ENCODE measurements at regions of chr7 and their contacts with region 1.

Region 1: GRCh38 chr7:55280031-55280454 is 85.1 kb upstream of the LANCL2 start:
- DNase-seq: peak; percentile 42 to 69 (median 56)
- H3K4me3 ChIP-seq: no peak overlapping the region
- H3K4me3 Mint-ChIP-seq: no peak overlapping the region
- H3K27ac ChIP-seq: no peak overlapping the region
- H3K27ac Mint-ChIP-seq: peak overlapping the region in 1 of 8 donors; percentile 80
- H3K4me1 ChIP-seq: no peaks in the 10 kb centered on the region
- H3K4me1 Mint-ChIP-seq: peaks cover 4 to 5% (median 5%) of the 10 kb centered on the region in 3 donors
- H3K27me3 ChIP-seq: no peaks in the 10 kb centered on the region
- H3K27me3 Mint-ChIP-seq: peaks cover 0 to 4% of the 10 kb centered on the region in 2 donors

Region 2: GRCh38 chr7:55212838-55213539 is 67.1 kb before region 1 on chr7:
- CTCF ChIA-PET with region 1: no interaction called
- POLR2A ChIA-PET with region 1: no interaction called
- DNase-seq: no peak
- H3K4me3 ChIP-seq: no peak overlapping the region
- H3K4me3 Mint-ChIP-seq: no peak overlapping the region
- H3K27ac ChIP-seq: no peak overlapping the region
- H3K27ac Mint-ChIP-seq: no peak overlapping the region
- H3K4me1 ChIP-seq: no peaks in the 10 kb centered on the region
- H3K4me1 Mint-ChIP-seq: no peaks in the 10 kb centered on the region
- H3K27me3 ChIP-seq: no peaks in the 10 kb centered on the region
- H3K27me3 Mint-ChIP-seq: peaks cover 11 to 14% of the 10 kb centered on the region in 2 donors

Region 3: DNA sequence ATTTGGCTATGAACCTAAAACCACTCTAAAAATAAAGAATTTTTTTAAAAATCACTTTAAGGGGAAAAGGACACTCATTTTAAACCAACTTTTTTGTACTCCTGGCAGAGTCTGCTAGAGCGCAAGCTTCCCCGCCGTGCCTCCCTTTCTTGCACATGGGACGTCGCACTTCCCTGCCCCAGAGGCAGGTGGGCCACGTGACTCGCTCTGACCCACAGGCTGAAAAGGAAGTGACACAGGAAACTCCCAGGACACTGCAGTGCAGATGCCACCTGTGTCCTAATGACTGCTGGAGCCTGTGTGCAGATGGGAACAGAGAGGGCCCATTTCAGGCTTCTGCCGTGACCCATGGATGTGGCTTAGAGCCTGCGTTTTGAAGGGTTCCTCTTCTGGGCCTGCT is 57.0 kb before region 1 on chr7:
- CTCF ChIA-PET with region 1: no interaction called
- POLR2A ChIA-PET with region 1: no interaction called
- DNase-seq: no peak
- H3K4me3 ChIP-seq: no peak overlapping the region
- H3K4me3 Mint-ChIP-seq: no peak overlapping the region
- H3K27ac ChIP-seq: no peak overlapping the region
- H3K27ac Mint-ChIP-seq: no peak overlapping the region
- H3K4me1 ChIP-seq: no peaks in the 10 kb centered on the region
- H3K4me1 Mint-ChIP-seq: no peaks in the 10 kb centered on the region
- H3K27me3 ChIP-seq: no peaks in the 10 kb centered on the region
- H3K27me3 Mint-ChIP-seq: peaks cover 3 to 8% of the 10 kb centered on the region in 2 donors

Region 4: GRCh38 chr7:55260671-55261385 is 19.2 kb before region 1 on chr7:
- CTCF ChIA-PET with region 1: no interaction called
- POLR2A ChIA-PET with region 1: no interaction called
- DNase-seq: no peak
- H3K4me3 ChIP-seq: no peak overlapping the region
- H3K4me3 Mint-ChIP-seq: no peak overlapping the region
- H3K27ac ChIP-seq: no peak overlapping the region
- H3K27ac Mint-ChIP-seq: no peak overlapping the region
- H3K4me1 ChIP-seq: no peaks in the 10 kb centered on the region
- H3K4me1 Mint-ChIP-seq: peaks cover 4 to 6% (median 5%) of the 10 kb centered on the region in 3 donors
- H3K27me3 ChIP-seq: peaks cover 5% of the 10 kb centered on the region
- H3K27me3 Mint-ChIP-seq: peaks cover 16 to 41% of the 10 kb centered on the region in 2 donors

Region 5: DNA sequence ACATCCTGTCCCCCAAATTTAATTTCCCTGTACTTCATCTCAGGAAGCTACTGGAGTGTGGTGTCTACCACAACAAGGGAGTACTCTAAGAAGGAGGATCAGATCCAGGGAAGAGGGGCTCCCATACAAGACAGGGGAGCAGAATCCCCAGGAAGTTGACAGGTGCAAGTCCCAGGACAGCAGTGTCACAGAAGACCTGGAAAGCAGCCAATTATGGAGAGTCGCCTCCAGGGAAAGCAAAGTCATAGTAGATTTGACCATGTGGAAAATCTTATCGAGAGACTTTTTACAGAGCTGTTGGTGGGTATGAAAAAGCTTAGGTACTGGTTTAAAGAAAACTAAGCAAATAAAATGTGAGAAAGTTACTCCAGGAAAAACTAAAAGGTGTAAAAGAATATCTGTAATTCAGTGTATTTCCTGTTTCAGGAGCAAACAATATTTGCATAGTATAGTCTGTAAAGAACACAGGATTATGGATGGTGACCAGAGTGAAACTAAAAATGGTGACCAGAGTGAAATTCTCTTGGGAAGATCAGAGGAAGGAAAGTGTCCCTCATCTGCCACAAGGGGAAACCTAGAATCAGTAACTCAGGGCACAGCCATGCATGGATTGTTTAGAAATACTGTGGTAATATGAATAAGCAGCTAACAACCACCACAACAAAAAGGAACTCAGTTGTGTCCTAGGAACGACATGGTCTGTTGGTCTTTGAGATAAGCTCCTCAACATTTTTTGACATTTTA is 129.6 kb after region 1 on chr7:
- CTCF ChIA-PET with region 1: interaction called, 66 read pairs
- POLR2A ChIA-PET with region 1: no interaction called
- DNase-seq: no peak
- H3K4me3 ChIP-seq: no peak overlapping the region
- H3K4me3 Mint-ChIP-seq: no peak overlapping the region
- H3K27ac ChIP-seq: no peak overlapping the region
- H3K27ac Mint-ChIP-seq: peak overlapping the region in 1 of 8 donors; percentile 21
- H3K4me1 ChIP-seq: no peaks in the 10 kb centered on the region
- H3K4me1 Mint-ChIP-seq: no peaks in the 10 kb centered on the region
- H3K27me3 ChIP-seq: no peaks in the 10 kb centered on the region
- H3K27me3 Mint-ChIP-seq: no peaks in the 10 kb centered on the region

Measured in CD8-positive, alpha-beta memory T cell (primary cell).